HepG2 (cell line): ENCODE measurements at regions of chr19 and their contacts with region 1.

Region 1: GRCh38 chr19:58154679-58155648 is 4.4 kb upstream of the ZNF329 start:
- DNase-seq: peak; percentile 88
- ATAC-seq: peak; percentile 92
- H3K4me3 ChIP-seq: peak overlapping the region; percentile 78 to 95 (median 86)
- H3K27ac ChIP-seq: peak overlapping the region; percentile 92
- H3K4me1 ChIP-seq: peaks cover 10% of the 10 kb centered on the region
- H3K27me3 ChIP-seq: no peaks in the 10 kb centered on the region; a peak in 1 of 5 replicates
- CTCF ChIP-seq: peak; percentile 100
- EP300 ChIP-seq: 0 out of 4 replicates have a peak, but pooled peaks of 1 of the 2 experiments have one; percentile 25
- POLR2A ChIP-seq: peak; percentile 79 to 80
- RAD21 ChIP-seq: peak; percentile 99

Region 2: GRCh38 chr19:57578487-57579205 is 576.3 kb before region 1 on chr19 and contains the start of gene ZNF416:
- CTCF ChIA-PET with region 1: no interaction called
- POLR2A ChIA-PET with region 1: no interaction called
- in situ Hi-C with region 1: loop called (anchors 10 kb)
- intact Hi-C with region 1: no loop called
- DNase-seq: peak; percentile 97
- ATAC-seq: peak; percentile 96
- H3K4me3 ChIP-seq: peak within 1 kb of the TSS; percentile 86 to 95 (median 92)
- H3K27ac ChIP-seq: no peak within 1 kb of the TSS
- H3K4me1 ChIP-seq: peaks cover 16% of the 10 kb centered on the region
- H3K27me3 ChIP-seq: no peaks in the 10 kb centered on the region; a peak in 1 of 5 replicates
- CTCF ChIP-seq: peak; percentile 80
- EP300 ChIP-seq: no peak
- POLR2A ChIP-seq: no peak; a peak in 1 of 4 replicates
- RAD21 ChIP-seq: 0 out of 2 replicates have a peak, but pooled peaks have one; percentile 16
- total RNA-seq, gene ZNF416: 5.3 and 6.6 TPM in 2 replicates

Region 3: DNA sequence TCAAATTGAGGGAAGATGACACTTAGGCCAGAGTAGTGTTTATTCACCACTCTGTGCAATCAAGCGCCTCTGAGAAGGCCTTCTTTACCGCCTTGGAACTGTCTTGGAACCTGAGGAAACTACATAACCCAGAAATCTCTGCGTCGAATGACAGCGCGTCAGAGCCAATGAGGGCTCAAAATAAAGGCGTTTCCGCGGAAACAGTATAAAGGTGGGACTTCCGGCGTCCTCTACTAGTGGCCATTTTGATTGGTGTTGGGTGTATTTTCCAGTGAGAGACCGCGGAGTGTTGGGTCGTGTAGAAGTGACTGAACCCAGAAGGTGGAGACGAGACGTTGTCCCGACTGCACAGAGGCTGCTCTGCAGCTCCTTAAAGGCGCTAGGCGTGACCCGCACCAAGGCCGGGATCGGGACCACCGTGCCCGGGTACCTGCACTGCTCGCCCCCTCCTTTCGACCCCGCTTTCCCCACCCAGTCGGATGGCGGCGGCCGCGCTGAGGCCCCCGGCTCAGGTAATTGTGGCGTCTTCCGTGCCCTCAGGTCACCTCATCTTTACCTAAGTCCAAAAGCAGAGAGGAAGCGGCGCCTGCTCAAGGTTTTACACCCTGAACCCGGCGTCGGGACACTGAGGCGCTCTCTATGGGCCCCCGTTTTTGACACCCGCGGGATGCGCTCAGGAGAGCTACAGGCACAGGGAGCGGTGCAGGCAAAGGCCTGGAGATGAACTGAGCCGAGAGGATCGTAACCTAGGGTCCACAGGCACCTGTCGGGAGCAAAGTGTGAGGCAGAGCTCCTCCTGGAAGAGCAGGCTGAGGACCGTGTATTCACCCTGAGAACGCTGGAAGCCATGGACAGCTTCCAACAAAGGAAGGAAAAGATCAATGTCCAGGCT is 408.1 kb before region 1 on chr19 and contains the start of gene ZNF776:
- CTCF ChIA-PET with region 1: no interaction called
- POLR2A ChIA-PET with region 1: no interaction called
- in situ Hi-C with region 1: loop called (anchors 10 kb)
- intact Hi-C with region 1: no loop called
- DNase-seq: peak; percentile 88
- ATAC-seq: peak; percentile 99
- H3K4me3 ChIP-seq: peak within 1 kb of the TSS; percentile 87 to 100 (median 99)
- H3K27ac ChIP-seq: peak within 1 kb of the TSS; percentile 89
- H3K4me1 ChIP-seq: peaks cover 33% of the 10 kb centered on the region
- H3K27me3 ChIP-seq: no peaks in the 10 kb centered on the region; a peak in 1 of 5 replicates
- CTCF ChIP-seq: peak; percentile 18; the same call in 1 of the 2 replicates
- EP300 ChIP-seq: no peak
- POLR2A ChIP-seq: peak; percentile 73 to 86; a peak in 3 of 4 replicates
- RAD21 ChIP-seq: no peak; the same call in 1 of the 2 replicates
- total RNA-seq, gene ZNF776: 15.6 and 16.9 TPM in 2 replicates

Region 4: GRCh38 chr19:57819475-57820148 is 335.4 kb before region 1 on chr19:
- CTCF ChIA-PET with region 1: no interaction called
- POLR2A ChIA-PET with region 1: no interaction called
- in situ Hi-C with region 1: no loop called
- intact Hi-C with region 1: loop called (anchors 10 kb)
- DNase-seq: peak; percentile 97
- ATAC-seq: peak; percentile 86
- H3K4me3 ChIP-seq: peak overlapping the region; percentile 86 to 96 (median 88)
- H3K27ac ChIP-seq: peak overlapping the region; percentile 90
- H3K4me1 ChIP-seq: peaks cover 62% of the 10 kb centered on the region
- H3K27me3 ChIP-seq: no peaks in the 10 kb centered on the region; a peak in 1 of 5 replicates
- CTCF ChIP-seq: peak; percentile 66
- EP300 ChIP-seq: no peak
- POLR2A ChIP-seq: peak; percentile 92 to 94
- RAD21 ChIP-seq: no peak; the same call in 1 of the 2 replicates

Region 5: GRCh38 chr19:57914531-57914930 is 240.4 kb before region 1 on chr19:
- CTCF ChIA-PET with region 1: no interaction called
- POLR2A ChIA-PET with region 1: interaction called, 3 read pairs
- in situ Hi-C with region 1: loop called (anchors 10 kb)
- intact Hi-C with region 1: no loop called
- DNase-seq: peak; percentile 13
- ATAC-seq: peak; percentile 13; the same call in 2 of the 3 replicates
- H3K4me3 ChIP-seq: 0 out of 6 replicates have a peak overlapping the region, but pooled peaks of 1 of the 3 experiments have one; percentile 86
- H3K27ac ChIP-seq: peak overlapping the region; percentile 17
- H3K4me1 ChIP-seq: peaks cover 21% of the 10 kb centered on the region
- H3K27me3 ChIP-seq: no peaks in the 10 kb centered on the region
- CTCF ChIP-seq: no peak
- EP300 ChIP-seq: peak in 1 of 2 experiments; percentile 55; a peak in 1 of 4 replicates
- POLR2A ChIP-seq: no peak
- RAD21 ChIP-seq: no peak

Region 6: GRCh38 chr19:57947208-57948134 is 207.5 kb before region 1 on chr19 and contains the start of gene ZNF256:
- CTCF ChIA-PET with region 1: interaction called, 7 read pairs
- POLR2A ChIA-PET with region 1: no interaction called
- in situ Hi-C with region 1: no loop called
- intact Hi-C with region 1: loop called (anchors 1 kb)
- DNase-seq: peak; percentile 93
- ATAC-seq: peak; percentile 99
- H3K4me3 ChIP-seq: peak within 1 kb of the TSS; percentile 76 to 90 (median 88)
- H3K27ac ChIP-seq: peak within 1 kb of the TSS; percentile 60
- H3K4me1 ChIP-seq: peaks cover 15% of the 10 kb centered on the region
- H3K27me3 ChIP-seq: no peaks in the 10 kb centered on the region; a peak in 1 of 5 replicates
- CTCF ChIP-seq: peak; percentile 93
- EP300 ChIP-seq: no peak
- POLR2A ChIP-seq: peak; percentile 55 to 60; a peak in 3 of 4 replicates
- RAD21 ChIP-seq: 0 out of 2 replicates have a peak, but pooled peaks have one; percentile 36
- total RNA-seq, gene ZNF256: 6.0 and 6.7 TPM in 2 replicates

Region 7: GRCh38 chr19:58021541-58022282 is 133.3 kb before region 1 on chr19:
- CTCF ChIA-PET with region 1: interaction called, 11 read pairs
- POLR2A ChIA-PET with region 1: interaction called, 3 read pairs
- in situ Hi-C with region 1: no loop called
- intact Hi-C with region 1: loop called (anchors 1 kb)
- DNase-seq: peak; percentile 53
- ATAC-seq: peak; percentile 75
- H3K4me3 ChIP-seq: no peak overlapping the region
- H3K27ac ChIP-seq: no peak overlapping the region
- H3K4me1 ChIP-seq: no peaks in the 10 kb centered on the region
- H3K27me3 ChIP-seq: no peaks in the 10 kb centered on the region
- CTCF ChIP-seq: peak; percentile 75
- EP300 ChIP-seq: no peak
- POLR2A ChIP-seq: no peak
- RAD21 ChIP-seq: no peak